ENCODE measurements at regions of chr22 and their contacts with region 1.

Region 1: GRCh38 chr22:36258701-36259614 is 6.0 kb downstream of the APOL1 start:
- DNase-seq: no peak
- ATAC-seq: no peak
- H3K4me3 ChIP-seq: no peak overlapping the region
- H3K27ac ChIP-seq: no peak overlapping the region
- H3K4me1 ChIP-seq: peaks cover 13% of the 10 kb centered on the region
- CTCF ChIP-seq: no peak
- EP300 ChIP-seq: no peak
- POLR2A ChIP-seq: no peak
- RAD21 ChIP-seq: no peak

Region 2: DNA sequence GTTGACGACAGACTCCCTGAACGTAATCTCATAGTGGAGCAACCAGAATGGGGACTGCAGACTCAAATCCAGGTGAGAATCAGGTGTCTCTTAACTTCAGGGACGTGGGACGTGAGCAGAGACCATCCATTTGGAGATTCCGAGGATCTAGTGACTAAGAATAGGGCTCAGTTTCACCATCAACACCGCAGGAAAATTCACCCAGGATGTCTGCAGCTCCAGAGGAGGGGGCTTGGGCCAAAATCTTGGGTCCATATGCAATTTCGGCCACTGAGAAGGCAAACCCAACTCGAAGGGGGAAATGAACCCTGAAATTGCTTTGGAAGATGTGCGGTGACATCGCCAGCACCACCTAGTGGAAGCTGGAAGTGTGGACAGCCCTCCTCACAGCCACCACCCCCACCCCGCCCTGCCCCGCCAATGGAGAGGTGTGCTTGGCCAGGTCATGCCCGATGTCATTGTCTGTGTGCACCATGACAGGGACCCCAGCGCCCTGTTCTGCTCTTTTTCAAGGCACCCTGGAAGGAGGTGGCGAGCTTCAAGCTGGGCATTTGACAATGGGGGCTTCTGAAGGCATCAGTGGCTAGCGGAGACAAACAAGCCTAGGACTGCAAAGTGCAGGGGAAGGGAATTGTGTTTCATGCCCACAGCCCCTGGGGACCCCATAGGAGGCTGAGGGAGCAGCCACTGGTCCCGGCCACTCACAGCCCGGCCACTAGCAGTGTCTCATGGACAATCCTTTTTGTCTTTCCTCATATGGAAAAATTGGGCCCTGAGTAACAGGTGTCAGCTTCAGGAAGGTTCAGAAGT is 18.7 kb after region 1 on chr22:
- CTCF ChIA-PET with region 1: interaction called, 16 read pairs
- POLR2A ChIA-PET with region 1: no interaction called
- DNase-seq: peak; percentile 31 to 62
- ATAC-seq: peak; percentile 84 to 93
- H3K4me3 ChIP-seq: no peak overlapping the region
- H3K27ac ChIP-seq: peak overlapping the region in 1 of 2 experiments; percentile 48; a peak in 1 of 6 replicates
- H3K4me1 ChIP-seq: 0 out of 3 replicates have a peak, but pooled peaks cover 2% of the 10 kb centered on the region
- CTCF ChIP-seq: peak; percentile 63
- EP300 ChIP-seq: no peak; a peak in 1 of 5 replicates
- POLR2A ChIP-seq: no peak
- RAD21 ChIP-seq: peak; percentile 46 to 57

Region 3: GRCh38 chr22:36419177-36419911 is 160.4 kb after region 1 on chr22:
- CTCF ChIA-PET with region 1: no interaction called
- POLR2A ChIA-PET with region 1: no interaction called
- DNase-seq: no peak
- ATAC-seq: peak; percentile 40 to 47; a peak in 4 of 6 replicates
- H3K4me3 ChIP-seq: no peak overlapping the region
- H3K27ac ChIP-seq: peak overlapping the region; percentile 40 to 70; a peak in 4 of 6 replicates
- H3K4me1 ChIP-seq: peaks cover 8% of the 10 kb centered on the region; the same call in 2 of the 3 replicates
- CTCF ChIP-seq: no peak
- EP300 ChIP-seq: no peak
- POLR2A ChIP-seq: no peak
- RAD21 ChIP-seq: no peak

Region 4: DNA sequence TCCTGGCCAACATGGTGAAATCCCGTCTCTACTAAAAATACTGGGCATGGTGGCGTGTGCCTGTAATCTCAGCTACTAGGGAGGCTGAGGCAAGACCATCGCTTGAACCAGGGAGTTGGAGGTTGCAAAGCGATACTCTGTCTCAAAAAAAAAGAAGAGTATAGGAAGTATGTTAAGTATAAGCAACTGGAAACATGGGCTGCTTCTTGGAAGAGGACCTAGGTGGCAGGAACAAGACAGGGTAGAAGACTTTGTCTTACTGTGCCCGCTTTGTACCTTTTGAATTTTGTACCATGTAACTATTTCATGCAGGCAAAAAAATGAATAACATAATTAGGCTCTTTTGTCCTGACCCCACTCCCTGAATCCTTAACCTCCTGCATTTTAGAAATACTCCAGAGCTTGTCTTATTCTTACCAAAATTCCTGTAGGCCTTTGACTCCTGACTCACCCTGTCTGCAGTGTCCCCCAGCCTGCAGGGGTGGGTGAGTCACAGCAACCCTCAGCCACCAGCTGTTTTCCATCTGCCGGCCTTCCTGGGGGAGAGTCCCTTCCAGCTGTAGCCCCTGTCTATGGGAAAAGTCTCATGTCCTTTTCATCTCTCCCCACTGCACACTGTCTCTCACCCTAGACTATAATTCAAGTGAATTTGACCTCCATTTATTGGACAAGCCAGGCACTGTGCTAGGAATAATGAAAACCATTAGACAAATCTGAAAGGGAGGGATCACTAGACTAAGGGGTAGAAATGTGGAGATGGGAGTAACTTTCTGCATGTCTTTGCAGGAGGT is 180.7 kb after region 1 on chr22:
- CTCF ChIA-PET with region 1: no interaction called
- POLR2A ChIA-PET with region 1: no interaction called
- DNase-seq: peak; percentile 55 to 85
- ATAC-seq: peak; percentile 86 to 92
- H3K4me3 ChIP-seq: no peak overlapping the region
- H3K27ac ChIP-seq: peak overlapping the region; percentile 69 to 79
- H3K4me1 ChIP-seq: peaks cover 48% of the 10 kb centered on the region
- CTCF ChIP-seq: no peak
- EP300 ChIP-seq: no peak
- POLR2A ChIP-seq: no peak
- RAD21 ChIP-seq: no peak

Measured in A549 (cell line).